ENCODE measurements at regions of chr9 and their contacts with region 1.

Region 1: DNA sequence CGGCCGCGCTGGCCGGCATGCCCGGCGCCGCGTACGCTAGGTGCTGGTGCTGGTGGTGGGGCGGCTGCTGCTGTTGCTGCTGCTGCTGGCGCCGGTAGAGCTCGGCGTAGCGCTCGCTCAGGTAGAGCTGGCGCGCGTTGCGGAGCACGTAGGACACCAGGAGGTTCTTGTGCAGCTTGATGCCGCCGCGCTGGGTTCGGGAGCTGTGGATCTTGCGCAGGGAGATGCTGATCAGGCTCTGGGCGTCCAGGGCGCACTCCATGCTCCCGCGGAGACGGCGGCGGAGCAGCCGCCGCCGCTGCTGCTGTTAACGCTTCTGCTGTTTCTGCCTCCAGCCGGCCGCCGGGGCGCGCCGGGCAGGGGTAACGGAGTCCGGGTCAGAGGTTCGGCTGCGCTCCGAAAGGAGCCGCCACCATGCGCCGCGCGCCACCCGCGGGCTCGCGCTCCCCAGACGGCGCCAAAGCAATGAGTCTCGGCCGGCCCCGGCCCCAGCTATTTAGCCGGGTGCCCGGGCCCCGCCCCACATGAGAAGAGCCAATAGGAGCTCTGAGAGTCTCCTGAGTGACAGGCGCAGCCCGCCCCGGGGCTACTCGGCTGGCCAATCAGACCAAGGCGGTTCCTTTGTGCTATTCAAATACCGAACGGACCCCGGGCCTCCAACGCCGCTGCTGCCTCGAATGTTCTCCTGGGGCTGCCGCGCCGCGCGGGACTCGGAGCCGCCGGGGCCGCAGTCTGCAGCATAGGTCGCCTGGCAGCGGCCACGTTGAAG is at the start of gene IER5L:
- DNase-seq: peak; percentile 89 to 97 (median 93)
- ATAC-seq: peak; percentile 85
- H3K4me3 ChIP-seq: peak within 1 kb of the TSS; percentile 70 to 86
- H3K4me3 Mint-ChIP-seq: peak within 1 kb of the TSS; percentile 92
- H3K27ac ChIP-seq: peak within 1 kb of the TSS in 1 of 2 experiments; percentile 50
- H3K27ac Mint-ChIP-seq: peak within 1 kb of the TSS; percentile 82
- H3K4me1 ChIP-seq: peaks cover 8% of the 10 kb centered on the region
- H3K4me1 Mint-ChIP-seq: peaks cover 10% of the 10 kb centered on the region
- H3K27me3 ChIP-seq: peaks cover 0 to 6% of the 10 kb centered on the region in 2 experiments
- H3K27me3 Mint-ChIP-seq: no peaks in the 10 kb centered on the region
- CTCF ChIP-seq: no peak
- total RNA-seq, gene IER5L: 21.7 to 25.1 TPM

Region 2: DNA sequence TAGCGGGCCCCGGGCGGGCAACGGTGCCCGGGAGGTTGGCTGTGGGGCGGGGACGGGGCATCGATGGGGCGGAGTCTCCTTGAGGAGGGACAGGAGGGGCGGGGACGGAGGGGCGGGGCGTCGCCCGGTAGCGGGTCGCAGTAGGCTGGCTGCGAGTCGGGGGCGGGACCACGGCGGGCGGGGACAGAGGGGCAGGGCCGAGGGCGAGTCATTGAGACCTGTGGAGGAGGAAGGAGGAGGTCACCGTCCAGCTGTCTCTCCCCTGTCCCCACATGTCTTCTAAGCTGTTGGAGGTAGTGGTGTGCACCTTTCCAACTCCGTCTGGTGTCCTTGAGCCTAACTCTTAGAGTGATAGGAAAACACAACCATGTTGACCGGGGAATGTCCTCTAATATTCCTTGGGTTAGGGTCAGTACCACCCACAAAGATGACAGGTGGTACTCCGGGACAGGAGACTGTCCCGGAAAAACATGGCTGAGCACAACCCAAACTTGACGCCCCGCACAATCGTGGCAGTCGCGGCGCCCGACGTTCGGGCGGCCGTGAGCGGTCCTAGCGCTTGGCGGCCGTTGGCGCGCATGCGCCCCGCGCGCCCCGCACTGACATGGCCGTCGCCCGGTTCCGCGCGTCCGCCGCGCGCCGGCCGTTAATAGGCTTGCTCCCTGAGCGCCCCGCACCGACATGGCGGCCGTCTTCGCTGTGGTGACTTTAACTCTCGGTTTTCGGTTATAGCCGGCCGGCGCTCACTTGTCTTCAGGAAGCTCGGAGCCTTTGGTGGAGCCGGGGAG is 67.0 kb before region 1 on chr9 and contains the starts of genes CRAT and PTPA:
- CTCF ChIA-PET with region 1: no interaction called
- POLR2A ChIA-PET with region 1: interaction called, 3 read pairs
- intact Hi-C with region 1: loop called in 1 of 2 experiments (anchors 2 kb)
- DNase-seq: peak; percentile 91 to 97 (median 96)
- ATAC-seq: peak; percentile 88
- H3K4me3 ChIP-seq: peak within 1 kb of the TSS; percentile 69 to 85
- H3K4me3 Mint-ChIP-seq: peak within 1 kb of the TSS; percentile 93
- H3K27ac ChIP-seq: peak within 1 kb of the TSS; percentile 79 to 81
- H3K27ac Mint-ChIP-seq: peak within 1 kb of the TSS; percentile 91
- H3K4me1 ChIP-seq: peaks cover 21% of the 10 kb centered on the region
- H3K4me1 Mint-ChIP-seq: peaks cover 39% of the 10 kb centered on the region
- H3K27me3 ChIP-seq: no peaks in the 10 kb centered on the region
- H3K27me3 Mint-ChIP-seq: no peaks in the 10 kb centered on the region
- CTCF ChIP-seq: no peak
- total RNA-seq, gene CRAT: 5.6 to 6.3 TPM
- total RNA-seq, gene PTPA: 24.7 to 26.8 TPM

Region 3: GRCh38 chr9:129166623-129167557 is 11.1 kb before region 1 on chr9:
- CTCF ChIA-PET with region 1: interaction called, 18 read pairs
- POLR2A ChIA-PET with region 1: interaction called, 9 read pairs
- intact Hi-C with region 1: no loop called
- DNase-seq: peak in 3 of 9 experiments; percentile 9 to 42 (median 17)
- ATAC-seq: peak; percentile 36
- H3K4me3 ChIP-seq: peak overlapping the region in 1 of 2 experiments; percentile 15
- H3K4me3 Mint-ChIP-seq: peak overlapping the region; percentile 32
- H3K27ac ChIP-seq: no peak overlapping the region
- H3K27ac Mint-ChIP-seq: no peak overlapping the region
- H3K4me1 ChIP-seq: peaks cover 9% of the 10 kb centered on the region
- H3K4me1 Mint-ChIP-seq: peaks cover 12% of the 10 kb centered on the region
- H3K27me3 ChIP-seq: no peaks in the 10 kb centered on the region
- H3K27me3 Mint-ChIP-seq: no peaks in the 10 kb centered on the region
- CTCF ChIP-seq: no peak

Region 4: DNA sequence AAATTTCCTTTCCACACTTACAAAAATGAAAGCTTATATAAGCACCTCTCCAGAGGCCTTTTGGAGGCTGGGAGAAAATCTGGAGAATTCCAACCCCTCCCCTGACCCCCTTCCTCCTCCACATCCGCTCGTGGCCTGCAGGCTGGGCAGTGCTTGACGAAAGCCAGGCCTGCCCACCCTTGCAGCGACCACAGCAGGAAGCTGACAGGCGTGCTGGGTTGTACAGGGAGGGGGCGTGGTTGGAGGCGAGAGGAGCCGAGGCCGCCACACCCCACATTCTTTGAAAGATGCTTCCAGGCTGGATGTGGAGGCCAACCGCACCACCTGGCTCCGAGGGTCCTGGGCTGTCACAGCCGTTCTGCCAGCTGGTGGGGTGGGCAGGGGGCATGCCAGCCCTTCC is 47.8 kb after region 1 on chr9:
- CTCF ChIA-PET with region 1: interaction called, 15 read pairs
- POLR2A ChIA-PET with region 1: interaction called, 16 read pairs
- intact Hi-C with region 1: no loop called
- DNase-seq: peak in 8 of 9 experiments; percentile 46 to 79 (median 62)
- ATAC-seq: peak; percentile 75
- H3K4me3 ChIP-seq: no peak overlapping the region
- H3K4me3 Mint-ChIP-seq: peak overlapping the region; percentile 50
- H3K27ac ChIP-seq: peak overlapping the region in 1 of 2 experiments; percentile 50
- H3K27ac Mint-ChIP-seq: peak overlapping the region; percentile 82
- H3K4me1 ChIP-seq: peaks cover 34% of the 10 kb centered on the region
- H3K4me1 Mint-ChIP-seq: peaks cover 42% of the 10 kb centered on the region
- H3K27me3 ChIP-seq: no peaks in the 10 kb centered on the region
- H3K27me3 Mint-ChIP-seq: no peaks in the 10 kb centered on the region
- CTCF ChIP-seq: no peak

Region 5: GRCh38 chr9:129320575-129321263 is 142.7 kb after region 1 on chr9:
- CTCF ChIA-PET with region 1: interaction called, 5 read pairs
- POLR2A ChIA-PET with region 1: interaction called, 16 read pairs
- intact Hi-C with region 1: loop called in 1 of 2 experiments (anchors 2 kb)
- DNase-seq: peak; percentile 15 to 85 (median 53)
- ATAC-seq: peak; percentile 92
- H3K4me3 ChIP-seq: peak overlapping the region; percentile 39 to 57
- H3K4me3 Mint-ChIP-seq: peak overlapping the region; percentile 80
- H3K27ac ChIP-seq: peak overlapping the region in 1 of 2 experiments; percentile 31
- H3K27ac Mint-ChIP-seq: peak overlapping the region; percentile 90
- H3K4me1 ChIP-seq: peaks cover 22% of the 10 kb centered on the region
- H3K4me1 Mint-ChIP-seq: peaks cover 11% of the 10 kb centered on the region
- H3K27me3 ChIP-seq: peaks cover 0 to 2% of the 10 kb centered on the region in 2 experiments
- H3K27me3 Mint-ChIP-seq: no peaks in the 10 kb centered on the region
- CTCF ChIP-seq: peak; percentile 51

Region 6: GRCh38 chr9:129413537-129414376 is 235.8 kb after region 1 on chr9:
- CTCF ChIA-PET with region 1: no interaction called
- POLR2A ChIA-PET with region 1: no interaction called
- intact Hi-C with region 1: loop called (anchors 1 kb)
- DNase-seq: peak; percentile 97 to 100 (median 99)
- ATAC-seq: peak; percentile 76
- H3K4me3 ChIP-seq: peak overlapping the region; percentile 56 to 87
- H3K4me3 Mint-ChIP-seq: peak overlapping the region; percentile 87
- H3K27ac ChIP-seq: peak overlapping the region; percentile 99
- H3K27ac Mint-ChIP-seq: peak overlapping the region; percentile 99
- H3K4me1 ChIP-seq: peaks cover 27% of the 10 kb centered on the region
- H3K4me1 Mint-ChIP-seq: peaks cover 33% of the 10 kb centered on the region
- H3K27me3 ChIP-seq: no peaks in the 10 kb centered on the region
- H3K27me3 Mint-ChIP-seq: no peaks in the 10 kb centered on the region
- CTCF ChIP-seq: no peak

Region 7: GRCh38 chr9:129626079-129626624 is 448.2 kb after region 1 on chr9 and contains the start of gene NTMT1:
- CTCF ChIA-PET with region 1: interaction called, 13 read pairs
- POLR2A ChIA-PET with region 1: interaction called, 8 read pairs
- intact Hi-C with region 1: no loop called
- DNase-seq: peak; percentile 86 to 96 (median 92)
- ATAC-seq: peak; percentile 74
- H3K4me3 ChIP-seq: peak within 1 kb of the TSS; percentile 94 to 99
- H3K4me3 Mint-ChIP-seq: peak within 1 kb of the TSS; percentile 83
- H3K27ac ChIP-seq: peak within 1 kb of the TSS; percentile 95 to 98
- H3K27ac Mint-ChIP-seq: peak within 1 kb of the TSS; percentile 98
- H3K4me1 ChIP-seq: peaks cover 51% of the 10 kb centered on the region
- H3K4me1 Mint-ChIP-seq: peaks cover 56% of the 10 kb centered on the region
- H3K27me3 ChIP-seq: no peaks in the 10 kb centered on the region
- H3K27me3 Mint-ChIP-seq: peaks cover 11% of the 10 kb centered on the region
- CTCF ChIP-seq: no peak
- total RNA-seq, gene NTMT1: 48.1 to 51.1 TPM

Measured in CD8-positive, alpha-beta T cell (primary cell).